MCF 10A (cell line): ENCODE measurements at regions of chr7 and their contacts with region 1.

Region 1: GRCh38 chr7:149753401-149754233 is 19.8 kb downstream of the ZNF467 start:
- DNase-seq: peak; percentile 60
- H3K4me3 Mint-ChIP-seq: no peak overlapping the region
- H3K27ac Mint-ChIP-seq: no peak overlapping the region
- H3K4me1 Mint-ChIP-seq: no peaks in the 10 kb centered on the region
- H3K27me3 Mint-ChIP-seq: no peaks in the 10 kb centered on the region
- CTCF ChIP-seq: peak; percentile 44

Region 2: DNA sequence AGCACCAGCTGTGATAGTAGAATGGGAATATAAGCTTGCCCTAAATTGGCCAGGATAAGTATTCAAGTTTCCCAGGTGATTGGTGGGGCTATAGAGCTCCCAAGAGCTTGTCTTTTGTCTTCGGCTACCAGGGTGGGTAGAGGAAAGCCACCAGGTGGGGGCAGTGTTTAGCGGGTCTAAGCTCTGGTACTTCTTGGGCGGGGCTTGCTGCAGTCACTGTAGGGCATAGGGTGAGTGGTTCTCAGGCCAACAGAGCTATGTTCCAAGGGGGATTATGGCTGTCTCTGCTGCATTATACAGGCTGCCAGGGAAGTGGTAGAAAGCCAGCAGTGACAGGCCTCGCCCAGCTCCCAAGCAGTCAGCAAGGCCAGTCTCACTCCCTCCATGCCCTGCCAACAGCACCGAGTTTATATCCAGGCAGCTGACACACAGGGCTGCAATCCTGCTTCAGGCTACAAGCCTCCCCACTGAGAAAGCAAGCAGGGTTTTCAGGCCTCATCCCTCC is 91.0 kb before region 1 on chr7:
- CTCF ChIA-PET with region 1: interaction called, 4 read pairs
- POLR2A ChIA-PET with region 1: no interaction called
- intact Hi-C with region 1: loop called (anchors 1 kb)
- DNase-seq: peak; percentile 84
- H3K4me3 Mint-ChIP-seq: no peak overlapping the region
- H3K27ac Mint-ChIP-seq: peak overlapping the region; percentile 13
- H3K4me1 Mint-ChIP-seq: no peaks in the 10 kb centered on the region
- H3K27me3 Mint-ChIP-seq: peaks cover 60% of the 10 kb centered on the region
- CTCF ChIP-seq: peak; percentile 54